RWPE1 (cell line): ENCODE measurements at regions of chr12 and their contacts with region 1.

Region 1: DNA sequence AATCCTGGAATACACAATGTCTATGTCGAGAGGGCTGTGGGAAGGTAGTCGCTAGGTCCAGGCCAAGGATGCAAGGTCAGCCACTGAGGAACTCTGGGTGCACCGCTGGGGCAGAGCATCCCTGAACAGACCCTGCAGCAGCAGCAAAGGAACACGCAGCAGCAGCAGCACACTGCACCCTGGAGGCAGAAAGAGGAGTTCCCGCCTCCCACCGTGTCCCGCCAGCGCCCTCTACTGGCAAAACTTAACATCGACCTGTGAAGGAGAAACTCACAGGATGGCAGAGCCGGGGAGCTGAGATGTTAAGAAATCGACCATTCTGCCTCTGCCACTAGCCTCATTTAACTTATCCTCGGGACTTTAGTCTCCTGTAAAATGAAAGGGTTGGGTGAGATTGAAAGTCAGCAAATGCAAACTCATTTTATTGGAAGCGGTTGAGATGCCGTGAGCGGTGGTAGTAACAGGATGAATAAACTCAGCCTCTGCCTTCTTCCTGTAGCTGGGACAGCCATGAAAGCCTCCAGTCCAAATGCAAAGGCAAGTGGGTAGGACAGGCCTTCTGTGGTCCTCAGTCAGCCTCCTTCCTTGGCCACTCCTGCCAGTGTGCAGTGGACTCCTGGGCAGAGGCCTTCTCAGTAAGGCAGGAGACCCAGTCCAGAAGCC is 45.6 kb downstream of the STAB2 start:
- DNase-seq: peak; percentile 59
- H3K27ac ChIP-seq: no peak overlapping the region
- CTCF ChIP-seq: peak; percentile 71

Region 2: GRCh38 chr12:103600967-103601728 is 31.5 kb before region 1 on chr12:
- CTCF ChIA-PET with region 1: no interaction called
- POLR2A ChIA-PET with region 1: no interaction called
- DNase-seq: no peak
- H3K27ac ChIP-seq: no peak overlapping the region
- CTCF ChIP-seq: no peak

Region 3: GRCh38 chr12:103620395-103620794 is 12.3 kb before region 1 on chr12:
- CTCF ChIA-PET with region 1: interaction called, 11 read pairs
- POLR2A ChIA-PET with region 1: no interaction called
- DNase-seq: no peak
- H3K27ac ChIP-seq: no peak overlapping the region
- CTCF ChIP-seq: no peak

Region 4: GRCh38 chr12:104049903-104050356 is 417.2 kb after region 1 on chr12 and contains the start of gene GLT8D2:
- CTCF ChIA-PET with region 1: no interaction called
- POLR2A ChIA-PET with region 1: no interaction called
- DNase-seq: peak; percentile 44
- H3K27ac ChIP-seq: peak within 1 kb of the TSS; percentile 76
- CTCF ChIP-seq: no peak